Posterior vena cava (tissue), 2 donors: ENCODE measurements at regions of chr3 and their contacts with region 1.

Region 1: GRCh38 chr3:28109829-28110228 is 131.6 kb upstream of the CMC1 start:
- DNase-seq: no peak

Region 2: DNA sequence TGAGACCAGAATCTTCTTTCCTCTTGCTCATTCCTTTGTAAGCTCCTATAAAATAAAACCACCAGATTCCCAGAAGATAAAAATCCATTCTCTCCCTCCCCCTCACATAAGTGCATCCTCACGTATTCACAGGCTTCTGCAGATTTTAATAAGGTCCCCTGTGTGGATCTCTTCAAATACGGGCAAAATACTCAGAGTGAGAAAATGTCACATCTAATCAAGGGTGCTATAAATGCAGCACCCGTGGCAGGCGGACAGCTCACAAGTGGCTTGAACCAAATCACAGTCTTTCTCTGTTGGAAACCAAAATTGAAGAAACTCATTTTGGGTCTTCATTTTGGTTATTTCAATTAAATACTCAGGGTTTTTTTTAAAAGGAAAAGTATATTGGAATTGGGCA is 81.3 kb before region 1 on chr3:
- intact Hi-C with region 1: loop called in 1 of 2 experiments (anchors 2 kb)
- DNase-seq: no peak

Region 3: DNA sequence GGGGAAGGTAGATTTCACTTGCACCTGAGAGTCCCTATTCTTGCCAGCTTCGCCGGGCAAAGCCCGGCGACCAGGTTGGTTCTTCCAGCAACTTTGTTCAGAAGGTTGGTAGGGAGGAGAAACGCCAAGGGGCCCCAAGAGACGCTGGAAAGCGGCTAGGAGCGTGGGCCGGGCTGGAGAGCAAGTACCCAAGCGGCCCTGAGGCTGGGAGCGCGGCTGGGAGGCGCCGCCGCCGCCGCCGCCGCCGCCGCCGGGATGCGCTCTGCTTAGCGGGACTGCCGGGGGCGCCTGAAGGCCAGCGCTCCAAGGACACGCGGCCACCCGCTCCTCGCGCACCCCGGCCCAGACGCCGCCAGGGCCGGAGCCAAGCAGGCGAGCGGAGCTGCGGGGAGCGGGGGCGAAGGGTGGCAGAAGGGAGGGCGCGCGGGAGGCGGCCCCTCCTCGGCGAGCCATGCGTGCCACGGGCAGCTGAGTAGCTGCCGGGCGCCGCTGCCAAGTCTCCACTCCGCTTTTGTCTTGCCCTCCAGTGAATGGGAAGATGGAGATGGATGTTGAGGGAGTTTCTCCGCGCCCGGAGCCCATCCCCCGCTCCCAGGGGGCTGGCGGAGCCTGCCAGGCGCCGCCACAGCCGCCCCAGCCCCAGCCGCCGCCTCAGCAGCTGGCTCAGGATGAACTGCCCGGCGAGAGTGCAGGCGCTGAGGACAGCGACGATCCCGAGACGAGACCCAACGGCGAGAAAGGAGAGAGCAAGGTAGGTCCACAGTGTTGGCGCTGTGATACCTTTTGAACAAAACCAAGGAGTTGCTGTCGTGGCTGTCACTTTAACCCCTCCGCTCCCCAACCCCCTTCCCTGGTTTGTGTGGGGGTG is 466.2 kb after region 1 on chr3:
- intact Hi-C with region 1: loop called in 1 of 2 experiments (anchors 5 kb)
- DNase-seq: no peak

Region 4: GRCh38 chr3:28935146-28935545 is 825.3 kb after region 1 on chr3:
- intact Hi-C with region 1: no loop called
- DNase-seq: no peak